ENCODE measurements at regions of chrX and their contacts with region 1.

Region 1: DNA sequence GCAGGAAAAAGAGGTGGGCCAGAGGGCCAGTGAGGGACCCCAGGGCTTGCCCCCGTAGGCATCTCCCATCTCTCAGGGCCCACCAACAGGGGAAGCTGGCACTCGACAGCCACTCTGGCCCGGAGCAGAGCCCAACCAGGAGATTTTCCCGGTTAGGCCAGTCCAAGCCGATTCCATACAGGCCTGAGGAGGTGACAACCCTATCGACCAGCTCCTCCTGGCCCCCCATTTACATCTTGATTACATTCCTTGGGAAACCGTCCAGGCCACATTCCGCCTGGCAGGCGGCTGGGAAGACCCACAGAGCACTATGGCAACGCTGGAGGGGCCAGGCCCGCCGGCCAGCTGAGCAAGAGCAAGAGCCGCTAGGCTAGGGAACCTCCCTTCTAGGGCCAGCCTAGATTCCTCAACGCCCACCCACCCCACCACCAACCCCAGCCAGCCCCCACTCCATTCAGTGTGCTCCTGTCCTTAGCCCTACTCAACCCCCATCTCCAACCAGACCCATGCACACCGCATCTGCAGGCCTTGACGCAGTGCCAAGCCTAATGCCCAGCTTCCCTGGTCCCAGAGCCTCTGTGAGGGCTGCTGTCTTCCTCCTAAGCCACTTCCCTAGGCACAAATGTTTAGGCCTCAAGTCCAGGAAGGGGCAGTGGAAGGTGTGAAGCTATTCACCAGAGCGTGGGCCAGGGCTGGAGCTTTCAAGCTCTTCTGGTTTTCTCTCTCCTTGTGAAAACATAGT is 161.2 kb downstream of the EFNB1 start:
- DNase-seq: peak; percentile 25 to 51
- ATAC-seq: peak; percentile 74 to 94 (median 82)
- H3K4me3 ChIP-seq: no peak overlapping the region
- H3K27ac ChIP-seq: peak overlapping the region in 6 of 10 donors; percentile 7 to 48 (median 26)
- H3K4me1 ChIP-seq: peaks cover 0 to 31% (median 18%) of the 10 kb centered on the region in 9 donors
- H3K27me3 ChIP-seq: peaks cover 0 to 5% (median 0%) of the 10 kb centered on the region in 7 donors
- CTCF ChIP-seq: no peak

Region 2: DNA sequence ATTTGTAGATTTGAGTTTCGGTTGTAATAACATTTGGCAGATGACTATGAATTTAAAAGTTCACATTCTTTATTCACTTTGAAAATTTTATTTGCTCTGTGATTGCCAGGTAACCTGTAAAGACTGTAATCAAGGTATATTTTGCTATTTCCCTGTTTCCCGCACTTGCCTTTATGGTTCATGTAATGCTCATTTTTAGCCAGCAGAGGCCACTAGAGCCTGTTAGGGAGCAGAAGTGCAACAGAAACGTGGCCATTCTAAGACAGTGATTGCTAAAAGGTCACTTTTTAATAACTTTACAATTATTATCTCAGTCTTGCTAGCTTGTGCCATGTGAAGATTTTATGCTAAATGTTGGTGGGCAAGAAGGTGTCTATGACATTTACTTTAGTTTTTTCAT is 478.8 kb before region 1 on chrX:
- intact Hi-C with region 1: no loop called
- DNase-seq: peak in 1 of 2 donors; percentile 26
- ATAC-seq: peak in 2 of 8 donors; percentile 50 to 58
- H3K4me3 ChIP-seq: no peak overlapping the region
- H3K27ac ChIP-seq: no peak overlapping the region
- H3K4me1 ChIP-seq: peaks cover 0 to 23% (median 5%) of the 10 kb centered on the region in 9 donors
- H3K27me3 ChIP-seq: no peaks in the 10 kb centered on the region
- CTCF ChIP-seq: peak; percentile 65 to 94 (median 72)

Region 3: GRCh38 chrX:68867458-68868112 is 122.5 kb before region 1 on chrX:
- intact Hi-C with region 1: no loop called
- DNase-seq: peak; percentile 16 to 21
- ATAC-seq: peak; percentile 35 to 82 (median 57)
- H3K4me3 ChIP-seq: no peak overlapping the region
- H3K27ac ChIP-seq: no peak overlapping the region
- H3K4me1 ChIP-seq: peaks cover 0 to 11% (median 0%) of the 10 kb centered on the region in 9 donors
- H3K27me3 ChIP-seq: peaks cover 0 to 9% (median 0%) of the 10 kb centered on the region in 7 donors
- CTCF ChIP-seq: no peak

Region 4: GRCh38 chrX:68929332-68930150 is 60.5 kb before region 1 on chrX:
- intact Hi-C with region 1: loop called in 2 of 10 experiments (anchors 5 to 10 kb)
- DNase-seq: peak; percentile 29 to 46
- ATAC-seq: peak in 7 of 8 donors; percentile 56 to 79 (median 74)
- H3K4me3 ChIP-seq: no peak overlapping the region
- H3K27ac ChIP-seq: peak overlapping the region in 9 of 10 donors; percentile 14 to 83 (median 60)
- H3K4me1 ChIP-seq: peaks cover 0 to 53% (median 20%) of the 10 kb centered on the region in 9 donors
- H3K27me3 ChIP-seq: peaks cover 0 to 7% (median 0%) of the 10 kb centered on the region in 7 donors
- CTCF ChIP-seq: no peak

Region 5: GRCh38 chrX:69031221-69031620 is 41.2 kb after region 1 on chrX:
- intact Hi-C with region 1: no loop called
- DNase-seq: no peak
- ATAC-seq: peak in 2 of 8 donors; percentile 31 to 58
- H3K4me3 ChIP-seq: no peak overlapping the region
- H3K27ac ChIP-seq: no peak overlapping the region
- H3K4me1 ChIP-seq: peaks cover 0 to 23% (median 4%) of the 10 kb centered on the region in 9 donors
- H3K27me3 ChIP-seq: peaks cover 0 to 14% (median 0%) of the 10 kb centered on the region in 7 donors
- CTCF ChIP-seq: peak in 4 of 9 donors; percentile 18 to 32 (median 30)

Region 6: DNA sequence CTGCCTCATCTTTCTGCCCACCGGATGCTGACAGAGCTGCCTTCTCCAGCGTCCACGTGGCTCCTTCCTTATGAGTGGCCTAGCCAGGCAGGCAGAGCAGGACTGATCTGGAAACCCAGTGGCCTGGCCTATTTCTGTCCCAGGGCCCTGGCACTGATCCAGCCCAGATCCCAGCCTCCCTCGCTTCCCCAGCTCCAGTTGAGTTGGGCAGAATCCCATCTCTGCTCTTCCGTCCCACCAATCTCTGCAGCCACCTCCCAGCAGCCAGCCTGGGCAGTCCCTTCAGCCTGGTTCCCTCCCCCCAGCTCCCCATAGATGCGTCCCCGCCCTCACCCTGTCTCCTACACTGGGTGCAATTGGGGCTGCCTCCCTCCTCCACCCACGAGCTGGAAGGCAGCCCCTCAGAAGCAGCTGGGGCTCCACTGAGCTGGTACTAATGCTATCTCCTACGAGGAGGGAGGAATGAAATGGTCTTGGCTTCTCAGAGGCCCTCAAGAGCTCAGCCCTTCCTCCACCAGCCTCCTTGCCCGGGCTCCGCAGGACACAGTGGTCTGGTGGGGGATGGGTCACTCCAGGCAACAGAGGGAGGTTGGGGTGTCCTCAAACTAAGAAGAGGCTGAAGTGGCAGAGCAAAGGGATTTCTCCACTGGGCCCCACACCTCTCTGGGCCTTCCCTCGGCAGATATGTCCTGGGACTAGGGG is 81.1 kb after region 1 on chrX:
- intact Hi-C with region 1: no loop called
- DNase-seq: peak; percentile 73 to 78
- ATAC-seq: peak; percentile 84 to 95 (median 92)
- H3K4me3 ChIP-seq: no peak overlapping the region
- H3K27ac ChIP-seq: peak overlapping the region in 4 of 10 donors; percentile 25 to 39 (median 30)
- H3K4me1 ChIP-seq: peaks cover 0 to 15% (median 4%) of the 10 kb centered on the region in 9 donors
- H3K27me3 ChIP-seq: peaks cover 0 to 25% (median 0%) of the 10 kb centered on the region in 7 donors
- CTCF ChIP-seq: no peak